ENCODE measurements at regions of chr10 and their contacts with region 1.

Region 1: GRCh38 chr10:9209105-9209798 is 1154.8 kb downstream of the GATA3 start:
- DNase-seq: no peak
- H3K4me3 ChIP-seq: no peak overlapping the region
- CTCF ChIP-seq: peak; percentile 82

Region 2: DNA sequence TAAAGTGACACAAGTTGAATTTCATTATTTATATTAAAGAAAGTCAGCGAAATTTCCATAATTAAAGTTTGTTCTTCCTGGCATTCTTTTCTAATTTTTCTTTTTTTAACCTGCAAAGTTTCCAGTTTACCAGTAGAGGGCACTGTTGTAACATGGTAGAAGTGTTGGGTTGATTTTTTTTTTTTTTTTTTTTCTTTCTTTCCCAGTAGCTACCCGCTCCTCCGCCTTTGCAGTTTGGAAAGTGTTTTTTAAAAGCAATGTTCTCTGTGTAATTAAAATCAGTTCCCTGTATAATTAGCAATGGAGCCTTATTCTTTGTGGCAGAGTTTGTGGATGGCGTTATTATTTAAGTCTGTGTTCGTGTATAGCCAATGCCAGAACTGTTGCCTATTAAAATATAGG is 1337.2 kb before region 1 on chr10:
- CTCF ChIA-PET with region 1: interaction called, 30 read pairs
- POLR2A ChIA-PET with region 1: no interaction called
- DNase-seq: no peak
- H3K4me3 ChIP-seq: peak overlapping the region; percentile 36
- CTCF ChIP-seq: peak; percentile 30

Region 3: DNA sequence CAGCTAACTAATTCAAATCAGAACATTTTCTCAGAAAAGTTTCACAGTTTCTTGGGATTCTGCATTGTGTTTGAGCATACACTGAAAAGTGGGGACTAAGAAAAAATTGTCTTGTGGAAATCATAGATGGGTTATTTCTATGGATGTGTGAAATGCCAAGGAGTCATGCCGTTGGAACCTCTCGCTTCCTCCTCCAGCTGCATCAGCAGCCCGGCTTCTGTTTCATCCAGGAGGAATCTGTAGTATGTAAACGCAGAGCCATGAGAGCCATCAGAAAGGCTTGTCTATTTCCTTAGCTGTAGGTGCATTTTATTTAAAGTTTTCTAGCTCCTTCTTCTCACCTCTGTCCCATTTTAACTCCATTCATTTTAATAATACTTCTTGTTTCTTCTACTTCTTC is 10.6 kb before region 1 on chr10:
- CTCF ChIA-PET with region 1: interaction called, 36 read pairs
- POLR2A ChIA-PET with region 1: no interaction called
- DNase-seq: peak; percentile 26
- H3K4me3 ChIP-seq: no peak overlapping the region
- CTCF ChIP-seq: no peak

Region 4: DNA sequence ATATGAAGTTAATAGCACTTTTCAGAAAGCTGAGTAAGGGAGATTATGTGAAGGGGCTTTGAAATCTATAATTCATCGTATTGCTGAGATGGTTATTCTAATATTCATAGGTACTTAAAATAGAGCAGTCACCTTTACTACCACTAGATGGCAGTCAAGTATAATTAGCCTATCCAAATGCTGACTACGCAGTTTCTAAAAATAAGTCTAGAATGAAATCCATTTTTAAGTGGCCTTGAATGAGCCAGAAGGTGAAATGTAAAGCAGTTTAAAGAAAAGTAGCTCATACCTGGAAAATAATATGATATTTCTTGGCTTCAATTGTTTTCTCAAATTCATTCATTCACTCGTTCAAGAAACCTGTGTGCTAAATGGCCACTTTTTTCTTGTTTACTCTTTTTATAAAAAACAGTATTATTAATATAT is 122.3 kb after region 1 on chr10:
- CTCF ChIA-PET with region 1: no interaction called
- POLR2A ChIA-PET with region 1: no interaction called
- DNase-seq: peak; percentile 10
- H3K4me3 ChIP-seq: no peak overlapping the region
- CTCF ChIP-seq: peak; percentile 48